ENCODE measurements at regions of chr13 and their contacts with region 1.

Region 1: GRCh38 chr13:53250266-53250875 is 221.8 kb downstream of the OLFM4 start:
- DNase-seq: peak; percentile 35
- CTCF ChIP-seq: peak; percentile 77

Region 2: GRCh38 chr13:53238261-53238660 is 12.1 kb before region 1 on chr13:
- CTCF ChIA-PET with region 1: interaction called, 13 read pairs
- POLR2A ChIA-PET with region 1: no interaction called
- DNase-seq: no peak
- CTCF ChIP-seq: no peak

Region 3: DNA sequence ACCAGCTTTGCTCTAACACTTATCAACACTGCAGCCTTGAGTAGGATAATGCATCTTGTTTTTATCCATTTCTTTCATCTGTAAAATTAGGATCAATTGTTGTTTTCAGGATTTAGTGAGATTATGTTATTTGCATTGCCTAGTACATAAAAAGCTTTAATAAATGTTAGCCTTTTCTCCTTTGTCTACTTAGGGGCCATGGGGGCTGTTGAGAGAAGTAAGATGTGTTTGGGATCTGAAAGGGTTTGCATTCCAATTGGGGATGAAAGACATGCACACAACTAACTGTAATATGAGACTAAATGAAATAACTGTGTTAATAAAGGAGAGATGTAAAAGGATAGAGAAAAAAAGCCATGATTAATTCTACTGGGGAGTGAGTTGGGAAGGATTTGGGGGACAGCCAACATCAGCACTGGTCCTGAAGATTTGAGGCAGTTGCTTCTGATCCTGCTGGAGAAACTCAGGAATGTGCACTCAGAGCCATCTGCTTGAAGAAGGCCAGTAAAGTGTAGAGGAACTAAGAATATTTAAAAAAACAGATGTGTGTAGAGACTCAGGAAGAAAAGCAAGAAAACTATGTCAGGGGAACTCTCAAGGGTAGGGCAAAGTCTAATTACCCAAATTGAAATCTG is 14.5 kb after region 1 on chr13:
- CTCF ChIA-PET with region 1: interaction called, 47 read pairs
- POLR2A ChIA-PET with region 1: no interaction called
- DNase-seq: no peak
- CTCF ChIP-seq: no peak

Region 4: DNA sequence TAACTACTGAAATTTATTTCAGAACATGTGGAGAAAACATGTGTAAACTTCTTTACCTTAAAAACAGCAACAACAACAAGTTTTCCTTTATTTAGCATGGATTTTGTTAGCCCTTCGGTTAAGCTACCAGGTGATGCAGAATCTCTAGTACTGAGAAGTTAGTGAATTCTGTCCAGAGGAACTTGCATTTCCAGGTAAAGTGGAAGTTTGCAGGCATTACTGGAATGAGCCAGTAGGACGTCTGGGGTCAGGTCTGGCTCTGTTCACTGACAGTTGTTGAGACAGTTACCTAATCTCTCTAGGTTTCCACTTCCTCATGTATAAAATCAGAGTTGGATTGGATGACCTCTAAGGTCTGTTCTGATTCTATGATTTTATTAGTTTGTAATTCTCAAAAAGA is 22.5 kb after region 1 on chr13:
- CTCF ChIA-PET with region 1: interaction called, 15 read pairs
- POLR2A ChIA-PET with region 1: no interaction called
- DNase-seq: no peak
- CTCF ChIP-seq: no peak